Right lobe of liver (tissue), 6 donors: ENCODE measurements at regions of chr15 and their contacts with region 1.

Region 1: DNA sequence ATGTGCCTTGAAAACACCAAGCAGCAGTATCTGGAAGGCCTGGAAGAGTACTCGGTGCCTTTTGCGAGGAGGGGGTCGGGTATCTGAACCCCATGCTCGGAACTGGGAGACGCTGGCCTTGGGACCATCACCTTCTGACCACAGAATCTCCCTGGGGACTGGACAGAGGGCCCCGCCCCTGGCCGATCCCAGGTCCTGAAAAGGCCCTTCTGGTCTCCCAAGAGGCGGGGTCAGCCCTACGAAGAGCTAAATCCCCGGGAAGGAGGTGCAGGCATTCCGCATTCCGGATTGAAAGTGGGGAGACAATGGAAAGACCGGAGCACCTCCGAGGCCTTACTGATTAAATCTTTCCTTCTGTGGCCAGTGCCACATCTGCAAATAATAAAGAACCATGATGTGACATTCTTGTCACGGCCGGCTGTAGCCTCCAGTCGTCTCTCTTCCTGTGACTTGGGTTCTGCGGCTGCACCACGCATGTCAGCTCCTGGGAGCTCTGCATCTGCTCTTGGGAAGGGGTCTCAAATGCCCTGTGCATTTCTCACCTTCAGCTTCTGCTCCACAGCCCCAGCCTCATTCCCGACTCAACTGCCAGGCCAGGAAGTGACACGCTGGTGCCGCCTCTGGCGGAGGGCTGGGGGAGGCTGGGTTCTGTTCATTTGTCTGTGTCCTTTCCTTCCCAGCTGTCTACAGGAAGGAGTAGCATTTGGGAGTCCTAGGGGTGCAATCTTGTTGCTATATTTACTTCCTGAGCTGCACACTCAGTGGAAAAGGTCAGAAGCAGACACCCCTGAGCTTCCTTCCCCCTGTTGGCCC is 173.5 kb downstream of the KLF13 start:
- DNase-seq: no peak
- ATAC-seq: peak; percentile 62 to 70 (median 65)
- H3K4me3 ChIP-seq: no peak overlapping the region
- H3K27ac ChIP-seq: peak overlapping the region in 1 of 3 donors; percentile 24
- H3K4me1 ChIP-seq: no peaks in the 10 kb centered on the region
- H3K27me3 ChIP-seq: no peaks in the 10 kb centered on the region
- CTCF ChIP-seq: no peak
- POLR2A ChIP-seq: no peak

Region 2: GRCh38 chr15:31554261-31554660 is 54.1 kb after region 1 on chr15:
- intact Hi-C with region 1: loop called in 1 of 2 experiments (anchors 10 kb)
- DNase-seq: peak in 1 of 3 donors; percentile 45
- ATAC-seq: peak; percentile 58 to 78 (median 66)
- H3K4me3 ChIP-seq: no peak overlapping the region
- H3K27ac ChIP-seq: no peak overlapping the region
- H3K4me1 ChIP-seq: no peaks in the 10 kb centered on the region
- H3K27me3 ChIP-seq: no peaks in the 10 kb centered on the region
- CTCF ChIP-seq: no peak
- POLR2A ChIP-seq: no peak

Region 3: GRCh38 chr15:31752065-31752762 is 252.1 kb after region 1 on chr15:
- intact Hi-C with region 1: no loop called
- DNase-seq: no peak
- ATAC-seq: no peak
- H3K4me3 ChIP-seq: no peak overlapping the region
- H3K27ac ChIP-seq: no peak overlapping the region
- H3K4me1 ChIP-seq: no peaks in the 10 kb centered on the region
- H3K27me3 ChIP-seq: no peaks in the 10 kb centered on the region
- CTCF ChIP-seq: no peak
- POLR2A ChIP-seq: no peak